Activated CD4-positive, alpha-beta memory T cell treated with anti-CD3 and anti-CD28 coated beads for 36 hours (primary cell): ENCODE measurements at regions of chr13 and their contacts with region 1.

Region 1: DNA sequence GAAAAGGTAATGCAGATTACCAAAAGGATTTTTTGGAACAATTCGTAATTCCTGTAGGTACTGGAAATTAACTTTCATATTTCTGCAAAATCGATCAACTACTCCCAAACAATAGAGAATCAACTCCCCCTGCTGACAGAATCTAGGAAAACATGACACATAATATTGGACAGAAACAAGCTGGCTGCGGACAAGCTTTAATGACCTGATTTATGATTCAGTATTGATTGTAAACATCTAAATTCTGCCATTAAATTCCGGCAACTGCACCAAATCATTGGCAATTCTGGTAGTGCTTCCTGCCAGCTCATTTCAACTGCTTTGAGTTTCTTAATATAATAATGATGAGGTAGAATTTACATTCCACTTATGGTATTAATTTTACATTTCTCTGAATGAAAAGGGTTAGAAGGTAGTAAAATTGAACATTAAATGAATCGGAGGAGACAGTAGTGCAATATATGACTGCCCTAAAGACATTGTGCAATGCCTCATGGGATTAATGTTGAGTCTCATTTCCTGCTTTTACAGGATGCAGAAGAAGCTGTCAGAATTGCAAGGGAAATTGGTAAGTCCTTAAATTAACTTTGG is 146.5 kb downstream of the PCCA start:
- DNase-seq: no peak
- H3K4me3 Mint-ChIP-seq: no peak overlapping the region
- H3K27ac Mint-ChIP-seq: no peak overlapping the region
- H3K4me1 Mint-ChIP-seq: peaks cover 4% of the 10 kb centered on the region
- H3K27me3 Mint-ChIP-seq: no peaks in the 10 kb centered on the region

Region 2: GRCh38 chr13:99900960-99901359 is 334.4 kb before region 1 on chr13:
- CTCF ChIA-PET with region 1: interaction called, 37 read pairs
- POLR2A ChIA-PET with region 1: no interaction called
- intact Hi-C with region 1: loop called (anchors 5 kb)
- DNase-seq: no peak
- H3K4me3 Mint-ChIP-seq: no peak overlapping the region
- H3K27ac Mint-ChIP-seq: no peak overlapping the region
- H3K4me1 Mint-ChIP-seq: no peaks in the 10 kb centered on the region
- H3K27me3 Mint-ChIP-seq: peaks cover 43% of the 10 kb centered on the region

Region 3: DNA sequence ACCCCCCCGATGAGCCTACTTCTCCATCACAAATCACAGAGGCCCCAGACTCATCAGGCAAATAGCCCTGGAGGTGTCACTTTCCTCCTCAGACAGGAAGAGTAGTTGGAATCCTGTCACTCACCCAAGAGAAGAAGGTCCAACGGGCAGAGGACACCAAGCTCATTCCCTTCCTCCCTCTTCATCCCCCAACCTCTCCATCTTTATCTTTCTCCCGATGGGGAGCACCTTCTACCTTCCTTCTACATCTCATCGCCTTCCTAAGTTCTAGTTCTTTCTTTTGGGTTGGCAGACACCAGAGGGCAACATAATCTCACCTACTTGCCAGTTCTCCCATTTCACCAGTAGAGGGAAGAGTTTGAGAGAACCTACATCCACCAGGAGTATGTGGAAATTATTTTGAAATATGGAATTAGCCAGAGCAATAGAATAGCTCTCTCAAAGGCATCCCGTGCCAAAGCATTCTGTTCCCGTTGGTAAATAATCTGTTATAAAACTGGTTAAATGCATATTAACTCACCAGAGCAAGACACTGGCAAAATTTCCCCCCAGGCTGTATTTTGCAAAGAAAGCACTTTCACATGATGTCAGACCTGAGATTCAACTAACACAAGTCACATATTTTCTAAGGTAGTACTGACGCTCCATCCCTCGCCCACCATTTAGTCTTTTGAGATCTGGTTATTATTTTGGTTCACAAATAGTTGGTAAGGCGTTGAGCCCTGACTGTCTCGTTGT is 318.9 kb before region 1 on chr13:
- CTCF ChIA-PET with region 1: interaction called, 21 read pairs
- POLR2A ChIA-PET with region 1: no interaction called
- intact Hi-C with region 1: loop called (anchors 1 kb)
- DNase-seq: no peak
- H3K4me3 Mint-ChIP-seq: no peak overlapping the region
- H3K27ac Mint-ChIP-seq: no peak overlapping the region
- H3K4me1 Mint-ChIP-seq: peaks cover 19% of the 10 kb centered on the region
- H3K27me3 Mint-ChIP-seq: peaks cover 5% of the 10 kb centered on the region

Region 4: DNA sequence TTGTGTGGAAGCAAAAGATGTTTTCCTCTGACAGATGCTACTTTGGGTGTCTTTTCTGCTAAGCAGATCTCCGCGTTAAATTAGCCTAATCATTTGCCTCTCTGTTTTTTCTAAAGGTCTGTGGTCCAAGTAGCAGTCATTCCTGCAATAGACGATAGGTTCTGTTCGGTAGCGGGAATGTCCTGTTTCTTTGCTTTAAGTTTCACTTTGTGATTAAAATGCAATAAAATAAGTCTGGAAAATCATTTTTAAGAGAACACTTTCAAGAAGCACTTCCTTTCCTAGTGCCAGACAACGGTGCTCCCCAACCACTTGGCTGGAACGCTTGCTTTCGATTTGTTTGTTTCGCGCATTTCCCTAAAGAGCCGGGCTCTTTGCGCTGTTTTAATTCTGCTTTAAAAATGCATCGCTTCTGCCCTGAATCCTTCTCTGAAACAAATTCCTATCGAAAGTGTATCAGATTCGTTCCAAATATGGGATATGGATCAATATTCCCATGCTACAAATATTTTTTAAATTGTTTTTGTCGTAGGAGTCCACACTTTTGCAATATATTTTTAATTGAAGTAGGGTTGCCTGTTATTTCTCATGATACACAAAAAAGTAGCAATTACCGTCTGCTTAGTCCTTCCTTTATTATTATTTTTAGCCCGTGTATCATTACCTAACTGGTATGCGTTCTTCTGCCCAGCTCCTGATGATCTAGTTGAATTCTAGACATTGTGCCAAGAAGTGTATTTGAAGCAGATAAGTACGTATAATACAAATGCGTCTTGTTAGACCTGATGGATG is 239.6 kb before region 1 on chr13:
- CTCF ChIA-PET with region 1: no interaction called
- POLR2A ChIA-PET with region 1: no interaction called
- intact Hi-C with region 1: loop called (anchors 5 kb)
- DNase-seq: no peak
- H3K4me3 Mint-ChIP-seq: no peak overlapping the region
- H3K27ac Mint-ChIP-seq: peak overlapping the region; percentile 36
- H3K4me1 Mint-ChIP-seq: peaks cover under 1% of the 10 kb centered on the region
- H3K27me3 Mint-ChIP-seq: peaks cover 73% of the 10 kb centered on the region

Region 5: DNA sequence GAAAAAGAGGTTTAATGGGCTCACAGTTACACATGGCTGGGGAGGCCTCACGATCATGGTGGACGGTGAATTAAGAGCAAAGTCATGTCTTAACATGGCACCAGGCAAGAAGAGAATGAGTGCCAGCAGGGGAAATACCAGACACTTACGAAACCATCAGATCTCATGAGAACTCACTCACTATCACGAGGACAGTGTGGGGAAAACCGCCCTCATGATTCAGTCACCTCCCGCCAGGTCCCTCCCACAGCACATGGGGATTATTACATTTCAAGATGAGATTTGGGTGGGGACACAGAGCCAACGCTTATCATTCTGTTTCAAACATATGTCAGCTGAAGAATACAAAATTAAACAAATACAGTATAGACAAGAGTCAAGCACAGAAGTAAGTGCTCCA is 18.6 kb after region 1 on chr13:
- CTCF ChIA-PET with region 1: no interaction called
- POLR2A ChIA-PET with region 1: no interaction called
- intact Hi-C with region 1: no loop called
- DNase-seq: no peak
- H3K4me3 Mint-ChIP-seq: no peak overlapping the region
- H3K27ac Mint-ChIP-seq: no peak overlapping the region
- H3K4me1 Mint-ChIP-seq: no peaks in the 10 kb centered on the region
- H3K27me3 Mint-ChIP-seq: no peaks in the 10 kb centered on the region